H1 (cell line): ENCODE measurements at regions of chr3 and their contacts with region 1.

Region 1: GRCh38 chr3:142963516-142964448 is at the start of gene PAQR9:
- DNase-seq: peak in 1 of 2 experiments; percentile 83
- H3K4me3 ChIP-seq: peak within 1 kb of the TSS; percentile 75 to 92 (median 84)
- H3K27ac ChIP-seq: no peak within 1 kb of the TSS
- H3K4me1 ChIP-seq: peaks cover 0 to 10% (median 6%) of the 10 kb centered on the region in 4 experiments; a peak in 5 of 7 replicates
- H3K27me3 ChIP-seq: peaks cover 5 to 29% (median 23%) of the 10 kb centered on the region in 4 experiments
- CTCF ChIP-seq: no peak
- EP300 ChIP-seq: peak in 1 of 2 experiments; percentile 50; a peak in 1 of 3 replicates
- POLR2A ChIP-seq: peak in 1 of 2 experiments; percentile 46; a peak in 1 of 3 replicates
- RAD21 ChIP-seq: no peak
- total RNA-seq, gene PAQR9: 2.6 and 2.7 TPM in 2 replicates

Region 2: DNA sequence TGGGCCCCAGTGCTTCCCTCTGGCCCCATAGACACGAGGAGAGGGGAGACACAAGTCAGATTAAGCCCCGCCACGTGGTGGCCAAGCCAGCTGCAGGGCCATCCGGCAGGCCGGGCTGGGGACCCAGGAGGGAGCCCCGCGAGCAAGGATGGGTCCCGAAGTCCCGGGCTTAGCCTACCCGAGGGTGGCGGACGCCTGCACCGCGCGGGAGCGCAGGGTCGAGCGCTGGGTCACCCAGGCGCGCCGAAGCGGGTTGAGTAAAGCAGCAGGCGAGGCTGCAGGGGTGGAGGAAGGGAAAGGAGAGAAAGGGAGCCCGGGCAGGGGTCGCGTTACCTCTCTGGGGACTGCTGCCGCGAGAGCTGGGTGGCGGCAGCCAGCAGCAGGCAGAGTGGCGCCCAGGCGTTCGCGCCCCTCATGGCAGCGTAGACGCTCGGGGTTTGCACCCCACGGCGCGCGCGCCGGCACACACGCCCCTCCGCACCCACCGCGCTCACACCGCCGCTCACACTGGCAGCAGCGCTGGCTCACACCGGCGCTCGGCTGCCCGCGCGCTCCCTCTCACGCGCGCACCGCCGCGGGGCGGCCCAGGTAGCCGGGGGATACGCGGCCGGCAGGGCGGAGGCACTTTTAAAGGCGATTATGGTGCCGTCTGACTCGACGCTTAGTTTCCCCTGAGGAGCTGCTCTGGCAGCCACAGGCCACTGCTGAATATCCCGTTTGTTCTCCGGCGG is 75.1 kb before region 1 on chr3 and contains the start of gene PCOLCE2:
- CTCF ChIA-PET with region 1: no interaction called
- POLR2A ChIA-PET with region 1: interaction called, 14 read pairs
- DNase-seq: peak in 1 of 2 experiments; percentile 86
- H3K4me3 ChIP-seq: peak within 1 kb of the TSS; percentile 47 to 71 (median 64)
- H3K27ac ChIP-seq: no peak within 1 kb of the TSS
- H3K4me1 ChIP-seq: peaks cover 0 to 4% (median 2%) of the 10 kb centered on the region in 4 experiments; a peak in 3 of 7 replicates
- H3K27me3 ChIP-seq: peaks cover 0 to 8% (median 5%) of the 10 kb centered on the region in 4 experiments; a peak in 5 of 7 replicates
- CTCF ChIP-seq: no peak
- EP300 ChIP-seq: no peak
- POLR2A ChIP-seq: peak; percentile 67 to 87
- RAD21 ChIP-seq: 0 out of 4 replicates have a peak, but pooled peaks of 1 of the 2 experiments have one; percentile 0
- total RNA-seq, gene PCOLCE2: 11.6 and 12.6 TPM in 2 replicates

Region 3: DNA sequence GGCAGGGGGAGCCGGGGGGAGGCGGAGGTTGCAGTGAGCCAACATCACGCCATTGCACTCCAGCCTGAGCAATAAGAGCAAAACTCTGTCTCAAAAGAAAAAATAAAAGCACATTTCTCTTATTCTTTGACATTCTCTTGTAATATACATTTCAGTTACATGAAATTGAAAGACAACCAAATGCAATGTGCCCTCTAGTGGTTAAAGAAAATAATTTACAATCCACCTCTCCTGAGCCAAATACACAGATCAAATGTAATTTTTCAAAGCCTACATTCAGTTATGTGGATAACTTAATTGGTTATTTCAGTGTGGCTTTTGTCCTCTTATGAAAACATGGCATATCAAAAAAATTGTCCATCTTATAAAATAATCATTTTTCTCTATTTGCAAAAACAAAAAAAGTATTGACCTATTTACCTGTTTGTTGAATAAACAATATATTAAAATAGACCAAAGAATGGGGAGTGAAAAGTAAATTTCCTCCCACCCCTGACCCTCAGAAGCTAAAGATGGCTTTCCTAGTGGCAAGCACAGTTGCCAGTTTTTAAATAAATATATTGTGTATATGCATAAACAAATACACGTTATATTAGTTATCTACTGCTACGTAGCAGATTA is 23.4 kb after region 1 on chr3:
- CTCF ChIA-PET with region 1: interaction called, 12 read pairs
- POLR2A ChIA-PET with region 1: interaction called, 6 read pairs
- DNase-seq: no peak
- H3K4me3 ChIP-seq: no peak overlapping the region
- H3K27ac ChIP-seq: no peak overlapping the region
- H3K4me1 ChIP-seq: peaks cover 0 to 3% (median under 1%) of the 10 kb centered on the region in 4 experiments; a peak in 3 of 7 replicates
- H3K27me3 ChIP-seq: no peaks in the 10 kb centered on the region
- CTCF ChIP-seq: peak in 2 of 3 experiments; percentile 38 to 53; a peak in 2 of 4 replicates
- EP300 ChIP-seq: no peak
- POLR2A ChIP-seq: no peak
- RAD21 ChIP-seq: peak in 1 of 2 experiments; percentile 43; a peak in 3 of 4 replicates

Region 4: DNA sequence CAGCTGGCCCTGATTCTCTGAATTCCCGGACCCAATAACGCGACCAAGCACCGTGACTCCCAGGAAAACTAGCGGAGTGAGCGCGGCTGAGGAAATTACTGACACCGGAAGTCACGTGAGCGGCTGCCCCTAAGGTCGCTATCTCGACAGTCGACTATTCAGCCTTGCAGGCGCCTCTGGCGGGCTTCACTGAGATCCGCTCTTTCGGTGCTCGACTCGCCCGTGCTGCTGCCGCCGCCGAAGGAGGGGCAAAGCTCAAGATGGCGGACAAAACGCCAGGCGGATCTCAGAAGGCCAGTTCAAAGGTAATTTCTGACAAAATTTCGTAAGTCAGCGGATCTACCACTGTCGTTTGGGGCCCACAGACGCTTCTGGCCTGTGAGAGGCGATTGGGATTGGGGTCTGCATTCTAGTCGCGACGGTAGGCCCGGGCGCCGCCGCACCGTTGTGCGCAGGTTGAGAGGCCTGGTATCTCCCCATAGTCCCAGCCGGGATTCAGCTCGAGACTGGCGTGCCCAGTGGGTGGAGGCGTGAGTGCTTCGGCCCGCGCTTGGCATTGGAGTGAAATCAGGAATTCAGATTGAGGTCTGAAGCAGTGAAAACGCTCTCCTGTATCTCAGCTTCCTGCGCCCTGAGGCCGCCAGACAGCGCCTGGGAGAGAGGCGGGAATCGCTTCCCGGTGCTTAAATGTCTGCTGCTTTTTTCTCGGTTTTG is 37.7 kb after region 1 on chr3 and contains the start of gene U2SURP:
- CTCF ChIA-PET with region 1: no interaction called
- POLR2A ChIA-PET with region 1: interaction called, 25 read pairs
- DNase-seq: peak; percentile 86
- H3K4me3 ChIP-seq: peak within 1 kb of the TSS; percentile 81 to 99 (median 90)
- H3K27ac ChIP-seq: peak within 1 kb of the TSS; percentile 89
- H3K4me1 ChIP-seq: peaks cover 0 to 4% (median 2%) of the 10 kb centered on the region in 4 experiments; a peak in 2 of 7 replicates
- H3K27me3 ChIP-seq: no peaks in the 10 kb centered on the region
- CTCF ChIP-seq: no peak
- EP300 ChIP-seq: peak in 1 of 2 experiments; percentile 83; a peak in 1 of 3 replicates
- POLR2A ChIP-seq: peak; percentile 86 to 92
- RAD21 ChIP-seq: no peak
- total RNA-seq, gene U2SURP: 160 and 167 TPM in 2 replicates